ENCODE measurements at regions of chr11 and their contacts with region 1.

Region 1: GRCh38 chr11:55607545-55607944 is at the start of gene OR4C11:
- DNase-seq: no peak
- ATAC-seq: no peak
- H3K4me3 ChIP-seq: no peak within 1 kb of the TSS
- H3K27ac ChIP-seq: no peak within 1 kb of the TSS
- H3K4me1 ChIP-seq: no peaks in the 10 kb centered on the region
- H3K27me3 ChIP-seq: no peaks in the 10 kb centered on the region
- total RNA-seq, gene OR4C11: not detected

Region 2: DNA sequence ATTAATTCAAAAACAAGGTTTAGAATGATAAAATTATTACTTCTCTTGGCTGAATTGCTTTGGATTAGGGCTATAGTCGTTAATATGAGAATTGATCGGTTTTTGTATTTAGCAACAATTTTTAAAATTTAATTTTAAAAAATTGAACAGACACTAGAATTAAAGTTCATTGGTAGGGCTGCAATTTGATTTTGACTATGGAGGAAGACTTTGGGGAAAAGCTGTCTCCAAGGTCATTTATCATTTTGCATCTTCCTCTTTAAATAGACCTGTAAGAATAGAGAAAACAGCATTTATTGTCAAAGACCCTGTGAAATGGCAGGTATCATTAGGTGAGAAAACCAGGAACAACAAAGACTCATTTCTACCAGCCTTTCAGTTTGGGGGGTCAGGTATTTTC is 40.5 kb after region 1 on chr11 and contains the start of gene OR4S2:
- intact Hi-C with region 1: no loop called
- DNase-seq: no peak
- ATAC-seq: no peak
- H3K4me3 ChIP-seq: no peak within 1 kb of the TSS
- H3K27ac ChIP-seq: no peak within 1 kb of the TSS
- H3K4me1 ChIP-seq: no peaks in the 10 kb centered on the region
- H3K27me3 ChIP-seq: no peaks in the 10 kb centered on the region
- total RNA-seq, gene OR4S2: not detected

Region 3: DNA sequence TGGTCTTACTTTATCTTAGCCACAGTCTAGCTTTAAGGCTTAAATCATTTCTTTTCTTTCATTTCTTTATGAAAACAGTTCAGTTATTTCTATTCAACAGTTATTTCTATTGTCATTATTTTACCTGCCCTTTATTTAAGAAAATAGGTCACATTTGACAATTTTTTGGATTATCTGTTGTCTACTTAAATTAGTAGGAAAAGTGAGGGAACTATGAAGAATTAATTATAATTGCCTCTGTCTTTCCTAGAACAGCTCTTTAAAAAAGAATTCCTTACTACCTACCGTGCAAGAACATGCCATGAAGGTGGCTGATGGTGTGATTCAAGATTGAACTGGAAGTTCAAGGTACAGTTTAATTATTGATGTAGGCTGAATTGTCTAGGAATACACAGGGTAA is 54.4 kb after region 1 on chr11 and contains the start of gene OR4C6:
- intact Hi-C with region 1: loop called in 1 of 2 experiments (anchors 10 kb)
- DNase-seq: no peak
- ATAC-seq: no peak
- H3K4me3 ChIP-seq: no peak within 1 kb of the TSS
- H3K27ac ChIP-seq: no peak within 1 kb of the TSS
- H3K4me1 ChIP-seq: no peaks in the 10 kb centered on the region
- H3K27me3 ChIP-seq: no peaks in the 10 kb centered on the region
- total RNA-seq, gene OR4C6: not detected

Region 4: DNA sequence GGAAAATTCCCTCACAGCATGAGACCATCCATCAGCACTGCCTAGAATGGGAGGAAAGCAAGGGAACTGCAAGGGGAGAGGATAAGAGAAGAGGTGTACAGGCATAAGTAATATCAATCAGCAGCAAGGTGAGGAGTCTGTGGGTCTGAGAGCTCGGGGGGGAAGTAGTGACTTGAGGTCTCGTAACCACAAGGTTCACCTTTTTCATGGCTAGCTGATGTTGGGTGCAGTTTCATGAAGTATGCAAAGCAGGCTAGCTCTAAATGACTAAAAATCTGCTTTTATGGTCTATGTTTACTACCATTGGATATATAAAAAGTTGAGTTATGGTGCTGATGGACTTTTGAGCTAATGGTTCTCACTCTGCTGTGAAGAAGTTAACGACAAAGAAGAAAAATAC is 90.3 kb after region 1 on chr11:
- intact Hi-C with region 1: no loop called
- DNase-seq: no peak
- ATAC-seq: no peak
- H3K4me3 ChIP-seq: no peak overlapping the region
- H3K27ac ChIP-seq: no peak overlapping the region
- H3K4me1 ChIP-seq: no peaks in the 10 kb centered on the region
- H3K27me3 ChIP-seq: no peaks in the 10 kb centered on the region